ENCODE measurements at regions of chr17 and their contacts with region 1.

Region 1: DNA sequence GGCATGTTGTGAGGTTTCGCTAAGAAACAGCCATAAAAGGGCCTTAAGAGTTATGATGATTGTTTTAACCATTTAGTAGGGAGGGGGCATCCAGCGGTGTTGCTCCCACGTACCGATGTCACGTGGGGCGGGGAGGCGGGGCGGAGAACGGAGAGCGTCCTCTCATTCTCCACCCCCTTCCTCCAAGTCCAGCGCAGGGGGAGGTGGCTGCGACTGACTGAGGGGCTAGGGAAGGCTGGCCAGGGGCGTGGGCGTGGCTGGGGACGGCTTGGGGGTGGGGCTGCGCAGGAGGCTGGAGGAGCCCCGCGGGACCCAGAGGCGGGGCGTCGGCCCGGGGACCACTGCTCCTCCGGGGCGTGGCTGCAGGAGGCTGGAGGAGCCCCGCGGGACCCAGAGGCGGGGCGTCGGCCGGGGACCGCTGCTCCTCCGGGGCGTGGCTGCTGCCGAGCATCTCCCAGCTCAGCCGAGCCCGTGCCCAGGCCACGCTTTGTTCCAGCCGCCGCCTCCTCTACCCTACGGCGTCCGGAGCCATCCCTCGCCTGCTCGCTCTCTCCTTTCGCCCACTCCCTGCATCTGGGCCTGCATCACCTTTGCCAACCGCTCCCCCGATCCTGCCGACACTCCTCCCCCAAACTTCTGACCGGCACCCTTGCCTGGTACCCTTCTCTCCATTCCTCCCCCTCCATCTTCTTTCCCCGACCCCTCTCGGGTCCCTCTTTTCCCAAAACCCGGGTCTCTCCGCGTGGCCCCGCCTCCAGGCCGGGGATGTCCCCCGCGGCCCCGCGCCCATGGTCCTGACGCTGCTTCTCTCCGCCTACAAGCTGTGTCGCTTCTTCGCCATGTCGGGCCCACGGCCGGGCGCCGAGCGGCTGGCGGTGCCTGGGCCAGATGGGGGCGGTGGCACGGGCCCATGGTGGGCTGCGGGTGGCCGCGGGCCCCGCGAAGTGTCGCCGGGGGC is at the start of gene SARM1:
- DNase-seq: peak; percentile 52 to 90 (median 64)
- ATAC-seq: peak; percentile 91
- H3K4me3 ChIP-seq: peak within 1 kb of the TSS; percentile 78
- H3K4me3 Mint-ChIP-seq: peak within 1 kb of the TSS; percentile 88 to 98 (median 94)
- H3K27ac ChIP-seq: peak within 1 kb of the TSS; percentile 88
- H3K27ac Mint-ChIP-seq: peak within 1 kb of the TSS; percentile 66 to 97 (median 93)
- H3K4me1 ChIP-seq: peaks cover 9 to 11% of the 10 kb centered on the region in 2 donors
- H3K4me1 Mint-ChIP-seq: peaks cover 10 to 25% (median 18%) of the 10 kb centered on the region in 7 donors
- H3K27me3 ChIP-seq: no peaks in the 10 kb centered on the region
- H3K27me3 Mint-ChIP-seq: no peaks in the 10 kb centered on the region
- total RNA-seq, gene SARM1: 21.8 to 34.1 (median 27.2) TPM

Region 2: GRCh38 chr17:28318759-28319660 is 52.5 kb before region 1 on chr17 and contains the start of gene TMEM97:
- CTCF ChIA-PET with region 1: no interaction called
- POLR2A ChIA-PET with region 1: no interaction called
- intact Hi-C with region 1: loop called (anchors 1 kb)
- DNase-seq: peak; percentile 83 to 95 (median 93)
- ATAC-seq: peak; percentile 99
- H3K4me3 ChIP-seq: peak within 1 kb of the TSS; percentile 69
- H3K4me3 Mint-ChIP-seq: peak within 1 kb of the TSS; percentile 77 to 97 (median 91)
- H3K27ac ChIP-seq: peak within 1 kb of the TSS; percentile 64
- H3K27ac Mint-ChIP-seq: peak within 1 kb of the TSS; percentile 37 to 90 (median 80)
- H3K4me1 ChIP-seq: peaks cover 11 to 12% of the 10 kb centered on the region in 2 donors
- H3K4me1 Mint-ChIP-seq: peaks cover 9 to 40% (median 21%) of the 10 kb centered on the region in 7 donors
- H3K27me3 ChIP-seq: no peaks in the 10 kb centered on the region
- H3K27me3 Mint-ChIP-seq: no peaks in the 10 kb centered on the region
- total RNA-seq, gene TMEM97: 2.9 to 19.9 (median 4.8) TPM

Region 3: DNA sequence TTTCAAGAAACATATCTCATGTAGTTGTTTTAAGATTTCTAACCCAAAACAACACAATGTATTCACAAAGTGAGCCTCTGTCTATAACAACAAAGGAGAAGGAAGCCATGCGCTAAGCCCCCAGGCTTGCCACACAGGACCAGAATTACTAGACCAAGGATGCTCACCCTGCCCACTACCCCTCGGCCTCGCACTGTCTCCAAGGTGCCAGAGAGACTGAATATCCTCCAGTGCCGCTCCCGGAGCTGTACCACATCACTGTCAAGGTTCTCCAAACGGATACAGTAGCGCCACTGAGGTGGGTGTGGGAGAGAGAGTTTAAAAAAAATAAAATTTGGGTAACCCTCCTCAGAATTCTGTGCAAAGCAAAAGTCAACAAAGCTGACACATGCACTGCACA is 21.3 kb before region 1 on chr17:
- CTCF ChIA-PET with region 1: no interaction called
- POLR2A ChIA-PET with region 1: no interaction called
- intact Hi-C with region 1: no loop called
- DNase-seq: no peak
- ATAC-seq: no peak
- H3K4me3 ChIP-seq: no peak overlapping the region
- H3K4me3 Mint-ChIP-seq: no peak overlapping the region
- H3K27ac ChIP-seq: no peak overlapping the region
- H3K27ac Mint-ChIP-seq: peak overlapping the region in 2 of 9 donors; percentile 7 to 21
- H3K4me1 ChIP-seq: no peaks in the 10 kb centered on the region
- H3K4me1 Mint-ChIP-seq: peaks cover 0 to 5% (median 4%) of the 10 kb centered on the region in 7 donors
- H3K27me3 ChIP-seq: no peaks in the 10 kb centered on the region
- H3K27me3 Mint-ChIP-seq: no peaks in the 10 kb centered on the region

Region 4: DNA sequence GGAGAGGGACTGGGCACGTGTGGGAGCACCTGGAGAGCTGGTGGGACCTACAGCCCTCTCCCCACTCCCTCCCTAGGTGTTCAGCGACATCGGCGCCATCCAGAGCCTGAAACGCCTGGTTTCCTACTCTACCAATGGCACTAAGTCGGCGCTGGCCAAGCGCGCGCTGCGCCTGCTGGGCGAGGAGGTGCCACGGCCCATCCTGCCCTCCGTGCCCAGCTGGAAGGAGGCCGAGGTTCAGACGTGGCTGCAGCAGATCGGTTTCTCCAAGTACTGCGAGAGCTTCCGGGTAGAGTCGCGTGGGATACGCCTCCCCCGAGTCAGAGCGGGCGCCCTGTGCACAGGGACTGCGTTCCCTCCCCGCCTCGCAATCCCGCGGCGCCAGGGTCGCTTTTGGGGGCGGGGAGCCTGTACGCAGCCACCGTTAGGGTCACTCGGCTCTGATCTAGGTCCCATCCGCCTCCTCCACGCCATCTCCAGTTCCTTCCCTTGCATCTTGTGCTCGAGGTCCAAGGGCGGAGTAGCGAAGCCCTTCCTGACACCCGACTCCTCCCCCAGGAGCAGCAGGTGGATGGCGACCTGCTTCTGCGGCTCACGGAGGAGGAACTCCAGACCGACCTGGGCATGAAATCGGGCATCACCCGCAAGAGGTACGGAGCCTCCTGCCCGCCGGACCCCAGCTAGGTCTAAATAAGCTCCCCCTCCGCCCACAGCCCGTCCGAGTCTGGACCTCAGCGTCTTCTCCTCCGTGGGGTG is 12.9 kb after region 1 on chr17:
- CTCF ChIA-PET with region 1: no interaction called
- POLR2A ChIA-PET with region 1: interaction called, 8 read pairs
- intact Hi-C with region 1: loop called in 1 of 2 experiments (anchors 1 kb)
- DNase-seq: peak; percentile 27 to 67 (median 57)
- ATAC-seq: peak; percentile 93
- H3K4me3 ChIP-seq: peak overlapping the region; percentile 78
- H3K4me3 Mint-ChIP-seq: peak overlapping the region; percentile 88 to 96 (median 94)
- H3K27ac ChIP-seq: peak overlapping the region; percentile 67
- H3K27ac Mint-ChIP-seq: peak overlapping the region; percentile 37 to 88 (median 77)
- H3K4me1 ChIP-seq: peaks cover 6 to 14% of the 10 kb centered on the region in 2 donors
- H3K4me1 Mint-ChIP-seq: peaks cover 8 to 48% (median 33%) of the 10 kb centered on the region in 7 donors
- H3K27me3 ChIP-seq: no peaks in the 10 kb centered on the region
- H3K27me3 Mint-ChIP-seq: peaks cover 0 to 10% (median 6%) of the 10 kb centered on the region in 5 donors

Region 5: DNA sequence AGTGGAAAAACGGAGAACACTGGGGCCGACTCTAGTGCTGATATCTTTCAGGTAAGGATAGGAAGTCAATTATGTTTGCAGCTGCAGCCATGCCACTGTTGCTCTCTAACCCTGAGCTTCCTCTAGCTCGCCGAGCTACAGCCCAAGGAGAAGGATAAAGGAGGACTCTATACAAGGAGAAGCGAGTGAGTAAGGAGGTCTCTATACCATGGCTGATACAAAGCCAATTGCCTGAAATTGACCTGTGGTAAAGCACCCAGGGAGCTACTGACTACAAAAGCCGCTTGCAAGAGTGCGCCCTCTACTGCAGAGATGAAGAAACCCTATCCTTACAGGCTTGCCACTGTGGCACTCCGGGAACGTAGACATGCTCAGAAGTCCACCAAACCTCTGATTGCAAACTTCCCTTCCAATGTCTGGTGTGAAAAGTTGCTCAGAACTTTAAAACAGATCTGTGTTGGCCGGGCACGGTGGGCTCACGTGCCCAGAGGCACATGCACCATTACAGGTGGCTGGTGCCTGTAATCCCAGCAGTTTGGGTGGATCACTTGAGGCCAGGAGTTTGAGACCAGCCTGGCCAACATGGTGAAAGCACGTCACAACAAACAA is 45.3 kb after region 1 on chr17:
- CTCF ChIA-PET with region 1: interaction called, 4 read pairs
- POLR2A ChIA-PET with region 1: no interaction called
- intact Hi-C with region 1: loop called in 1 of 2 experiments (anchors 2 kb)
- DNase-seq: peak; percentile 18 to 58 (median 40)
- ATAC-seq: peak; percentile 89
- H3K4me3 ChIP-seq: no peak overlapping the region
- H3K4me3 Mint-ChIP-seq: peak overlapping the region in 1 of 10 donors; percentile 12
- H3K27ac ChIP-seq: no peak overlapping the region
- H3K27ac Mint-ChIP-seq: no peak overlapping the region
- H3K4me1 ChIP-seq: no peaks in the 10 kb centered on the region
- H3K4me1 Mint-ChIP-seq: peaks cover 0 to 6% (median 4%) of the 10 kb centered on the region in 7 donors
- H3K27me3 ChIP-seq: no peaks in the 10 kb centered on the region
- H3K27me3 Mint-ChIP-seq: peaks cover 0 to 27% (median 8%) of the 10 kb centered on the region in 5 donors